ENCODE measurements at regions of chr6 and their contacts with region 1.

Region 1: DNA sequence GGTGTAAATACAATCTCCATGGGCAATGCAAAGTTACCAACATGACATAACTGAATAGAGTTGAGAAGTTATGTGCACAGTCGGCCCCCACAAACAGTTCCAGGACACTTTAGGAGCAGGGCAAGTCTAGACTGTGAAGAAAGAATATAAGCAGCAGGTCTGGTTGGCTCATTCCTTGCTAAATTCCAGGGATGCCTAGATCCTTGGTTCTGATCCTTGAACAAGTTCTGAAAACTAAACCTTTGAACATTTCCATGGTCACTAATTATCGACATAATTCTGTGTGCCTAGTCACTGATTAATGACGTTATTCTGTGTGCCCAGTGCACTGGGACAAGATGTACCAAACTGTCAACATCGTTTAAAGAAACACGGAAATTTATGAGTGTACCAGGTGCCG is 12.2 kb downstream of the ZNF184 start:
- DNase-seq: no peak
- H3K4me3 Mint-ChIP-seq: no peak overlapping the region
- H3K27ac Mint-ChIP-seq: no peak overlapping the region
- H3K4me1 Mint-ChIP-seq: peaks cover under 1% of the 10 kb centered on the region
- H3K27me3 Mint-ChIP-seq: no peaks in the 10 kb centered on the region
- CTCF ChIP-seq: no peak

Region 2: GRCh38 chr6:27388293-27389197 is 72.2 kb before region 1 on chr6 and contains the start of gene ZNF391:
- CTCF ChIA-PET with region 1: no interaction called
- POLR2A ChIA-PET with region 1: no interaction called
- intact Hi-C with region 1: loop called (anchors 5 kb)
- DNase-seq: peak; percentile 75
- H3K4me3 Mint-ChIP-seq: peak within 1 kb of the TSS; percentile 92
- H3K27ac Mint-ChIP-seq: peak within 1 kb of the TSS; percentile 90
- H3K4me1 Mint-ChIP-seq: peaks cover 12% of the 10 kb centered on the region
- H3K27me3 Mint-ChIP-seq: no peaks in the 10 kb centered on the region
- CTCF ChIP-seq: no peak
- total RNA-seq, gene ZNF391: 6.2 and 8.3 TPM in 2 replicates

Region 3: DNA sequence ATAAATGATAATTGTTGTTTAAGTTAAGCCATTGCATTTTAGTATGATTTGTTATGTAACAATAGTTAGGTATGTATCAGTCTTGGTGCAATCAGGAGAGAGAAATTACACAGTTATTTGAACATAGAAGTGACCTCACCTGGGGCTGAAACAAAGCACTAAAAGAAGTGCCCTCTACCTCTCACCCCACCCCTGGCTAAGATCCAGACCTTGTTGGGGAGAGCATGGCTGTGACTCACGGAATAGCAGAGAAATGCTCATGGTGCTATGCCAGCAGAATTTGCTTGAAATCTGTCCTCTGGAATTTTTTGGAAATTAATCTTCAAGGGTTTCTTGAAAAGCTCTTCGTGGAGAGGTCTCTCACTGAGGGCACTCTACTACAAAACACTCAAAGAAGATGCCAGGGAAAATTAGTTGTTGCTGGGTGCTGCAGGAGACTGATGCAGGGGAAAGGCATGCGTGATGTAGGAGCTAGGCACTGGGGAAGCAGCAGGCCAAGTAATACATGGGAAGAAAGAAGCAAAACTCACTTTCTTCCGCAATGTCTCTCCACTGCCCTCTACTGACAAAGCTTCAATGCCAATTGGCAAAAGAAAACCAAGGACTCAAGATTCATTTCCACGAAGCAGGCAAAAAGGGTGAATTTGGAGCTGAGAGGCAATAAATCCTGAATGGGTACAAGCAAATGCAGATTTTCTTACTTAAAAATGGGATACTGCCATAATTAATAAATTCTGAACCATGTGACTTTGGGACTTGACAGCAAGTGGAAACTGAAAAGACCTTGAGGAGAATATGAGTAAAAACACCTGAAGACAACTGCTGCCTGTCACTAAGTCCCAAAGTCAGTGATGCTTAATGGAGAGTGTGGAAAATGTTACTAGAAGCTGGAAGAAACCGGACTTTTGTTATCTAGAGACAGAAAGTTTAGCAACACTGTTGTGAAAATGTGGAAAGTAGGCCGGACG is 148.5 kb after region 1 on chr6:
- CTCF ChIA-PET with region 1: no interaction called
- POLR2A ChIA-PET with region 1: no interaction called
- intact Hi-C with region 1: no loop called
- DNase-seq: peak; percentile 89
- H3K4me3 Mint-ChIP-seq: peak overlapping the region; percentile 47
- H3K27ac Mint-ChIP-seq: peak overlapping the region; percentile 83
- H3K4me1 Mint-ChIP-seq: peaks cover 22% of the 10 kb centered on the region
- H3K27me3 Mint-ChIP-seq: no peaks in the 10 kb centered on the region
- CTCF ChIP-seq: peak; percentile 77

Region 4: GRCh38 chr6:27720607-27721580 is 260.2 kb after region 1 on chr6:
- CTCF ChIA-PET with region 1: no interaction called
- POLR2A ChIA-PET with region 1: no interaction called
- intact Hi-C with region 1: no loop called
- DNase-seq: peak; percentile 43
- H3K4me3 Mint-ChIP-seq: no peak overlapping the region
- H3K27ac Mint-ChIP-seq: no peak overlapping the region
- H3K4me1 Mint-ChIP-seq: peaks cover 6% of the 10 kb centered on the region
- H3K27me3 Mint-ChIP-seq: no peaks in the 10 kb centered on the region
- CTCF ChIP-seq: no peak